Activated T-helper 1 cell treated with anti-CD3 and anti-CD28 coated beads, Interleukin-12 subunit alpha, Interleukin-12 subunit beta, Interleukin-2, Interleukin-4 antibody, amounts not matched to agents 30 ng/mL and 10 ng/mL and 1 ng/mL, durations not matched to agents 14 hours and 24 hours and 36 hours (primary cell): ENCODE measurements at regions of chr6 and their contacts with region 1.

Region 1: DNA sequence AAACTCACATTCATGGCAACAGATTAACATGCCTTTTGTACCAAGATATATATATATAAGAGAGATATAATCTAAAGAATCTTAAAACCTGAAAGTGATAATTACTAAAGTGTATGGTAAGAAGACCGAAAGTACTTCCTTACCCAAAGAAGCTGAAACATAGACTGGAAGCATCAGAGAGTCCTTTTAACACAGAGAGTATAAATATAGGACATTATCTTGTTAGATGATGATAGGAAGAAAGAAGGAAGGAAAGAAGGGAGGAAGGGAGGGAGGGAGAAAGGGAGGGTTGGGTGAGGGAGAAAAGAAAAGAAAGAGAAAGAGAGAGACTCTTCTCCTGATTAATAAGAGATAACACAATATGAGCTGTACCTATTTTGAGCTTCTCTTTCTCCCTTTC is 68.2 kb downstream of the PHIP start:
- DNase-seq: no peak
- H3K4me3 Mint-ChIP-seq: no peak overlapping the region
- H3K27ac Mint-ChIP-seq: peak overlapping the region; percentile 62
- H3K4me1 Mint-ChIP-seq: no peaks in the 10 kb centered on the region
- H3K27me3 Mint-ChIP-seq: no peaks in the 10 kb centered on the region

Region 2: DNA sequence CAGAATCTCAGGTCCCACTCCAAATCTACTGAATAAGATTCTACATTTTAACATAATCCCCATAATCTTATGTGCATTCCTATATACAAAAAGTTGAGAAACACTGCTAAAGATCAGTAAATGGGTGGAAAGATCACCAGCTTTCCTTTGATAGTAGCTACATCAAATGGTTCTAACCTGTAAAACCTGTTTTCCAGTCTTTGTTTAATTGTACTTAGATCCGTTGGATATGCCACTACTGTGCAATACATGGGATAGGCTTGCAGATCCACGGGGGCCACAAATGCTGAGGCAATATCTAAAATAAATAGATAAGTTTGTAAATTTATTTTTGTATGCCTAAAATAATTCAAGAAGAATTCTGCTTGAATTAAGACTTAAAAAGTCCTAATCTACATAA is 48.3 kb before region 1 on chr6:
- intact Hi-C with region 1: loop called (anchors 5 kb)
- DNase-seq: no peak
- H3K4me3 Mint-ChIP-seq: no peak overlapping the region
- H3K27ac Mint-ChIP-seq: no peak overlapping the region
- H3K4me1 Mint-ChIP-seq: no peaks in the 10 kb centered on the region
- H3K27me3 Mint-ChIP-seq: no peaks in the 10 kb centered on the region